HepG2 (cell line): ENCODE measurements at regions of chr1 and their contacts with region 1.

Region 1: DNA sequence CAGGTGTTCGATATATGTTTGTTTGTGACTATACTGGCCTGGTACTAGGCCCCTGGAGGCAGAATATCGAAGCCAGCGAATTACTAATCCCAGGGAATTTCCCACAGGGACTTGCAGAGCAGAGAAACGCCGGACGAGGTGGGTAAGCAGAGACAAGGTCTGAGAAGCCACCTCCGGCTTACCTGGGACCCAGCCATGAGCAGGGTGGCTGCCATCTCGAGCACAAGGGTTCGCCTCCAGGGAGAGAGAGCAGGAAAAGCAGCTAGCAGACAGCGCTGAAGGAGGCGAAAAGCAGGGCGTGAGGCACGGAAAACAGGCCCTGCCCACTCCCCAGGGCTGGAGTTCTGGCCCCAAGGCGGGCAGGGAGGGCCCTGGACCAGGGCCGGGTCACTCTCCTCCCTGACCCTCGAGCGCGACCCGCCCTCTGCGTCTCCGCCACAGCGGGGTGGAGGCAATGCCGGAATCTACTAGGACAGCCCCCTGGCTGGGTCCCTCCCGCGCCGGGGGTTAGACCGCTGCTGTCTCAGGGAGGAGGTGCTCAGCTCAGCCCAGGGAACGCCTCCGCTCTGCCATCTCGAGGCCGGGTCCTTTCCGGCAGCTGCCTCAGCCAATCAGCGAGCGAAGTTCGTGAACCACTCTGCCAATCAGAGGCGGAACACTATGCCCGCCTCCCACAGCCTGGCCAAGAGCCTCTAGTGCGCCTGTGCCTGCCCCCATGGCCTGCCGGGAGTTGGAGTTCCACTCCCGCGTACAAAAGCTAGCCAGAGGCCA is 1.7 kb downstream of the ZNF436 start:
- DNase-seq: peak; percentile 97
- ATAC-seq: peak; percentile 92
- H3K4me3 ChIP-seq: peak overlapping the region; percentile 92 to 99 (median 93)
- H3K27ac ChIP-seq: peak overlapping the region; percentile 96
- H3K4me1 ChIP-seq: peaks cover 34% of the 10 kb centered on the region
- H3K27me3 ChIP-seq: no peaks in the 10 kb centered on the region; a peak in 1 of 5 replicates
- CTCF ChIP-seq: no peak; the same call in 1 of the 2 replicates
- EP300 ChIP-seq: no peak
- POLR2A ChIP-seq: peak; percentile 85 to 86
- RAD21 ChIP-seq: peak; percentile 10; the same call in 1 of the 2 replicates

Region 2: DNA sequence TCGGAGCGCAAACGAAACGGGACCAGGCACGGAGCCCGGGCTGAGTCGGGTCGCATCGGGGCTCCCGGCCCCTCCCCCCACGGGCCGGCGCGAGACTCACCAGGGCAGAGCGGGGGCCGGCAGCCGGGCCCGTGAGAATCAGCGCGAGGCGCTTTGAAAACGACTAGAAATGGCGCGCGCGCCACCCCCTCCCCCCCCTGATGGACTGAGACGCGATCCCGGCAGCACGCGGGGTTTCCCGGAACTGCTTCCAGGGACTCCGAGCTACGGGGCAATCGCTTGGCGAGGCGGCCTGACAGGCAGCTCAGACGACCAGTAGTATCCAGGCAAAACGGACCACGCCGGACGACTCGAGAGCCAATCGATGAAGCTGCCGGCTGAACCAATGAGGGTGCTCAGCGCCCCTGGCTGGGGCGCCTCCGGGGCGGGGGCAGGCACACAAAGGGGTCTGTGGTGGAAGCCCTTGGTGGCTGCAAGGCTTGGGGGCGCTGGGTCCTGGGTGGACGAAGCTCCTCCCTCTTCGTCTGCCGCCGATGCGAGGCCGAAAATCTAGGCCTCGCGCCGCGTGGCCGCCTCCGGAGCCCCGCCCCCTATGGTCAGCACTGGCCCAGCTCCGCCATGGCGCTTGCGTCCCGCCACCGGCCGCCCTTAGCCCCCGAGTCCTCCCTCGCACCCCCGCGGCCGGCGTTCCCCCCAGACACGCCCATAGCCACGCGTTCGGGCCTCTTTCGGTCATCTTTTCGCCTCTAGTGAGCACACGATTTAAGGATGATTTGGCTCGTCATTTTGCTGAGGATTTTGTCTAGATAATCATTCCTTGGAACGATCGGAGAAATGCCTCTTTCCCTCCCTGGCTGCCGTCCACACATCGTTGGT is 23.6 kb before region 1 on chr1 and contains the start of gene HNRNPR:
- CTCF ChIA-PET with region 1: no interaction called
- POLR2A ChIA-PET with region 1: interaction called, 130 read pairs
- in situ Hi-C with region 1: no loop called
- intact Hi-C with region 1: loop called (anchors 2 kb)
- DNase-seq: peak; percentile 99
- ATAC-seq: peak; percentile 97
- H3K4me3 ChIP-seq: peak within 1 kb of the TSS; percentile 81 to 83 (median 83)
- H3K27ac ChIP-seq: peak within 1 kb of the TSS; percentile 94
- H3K4me1 ChIP-seq: peaks cover 31% of the 10 kb centered on the region
- H3K27me3 ChIP-seq: no peaks in the 10 kb centered on the region; a peak in 2 of 5 replicates
- CTCF ChIP-seq: peak; percentile 36
- EP300 ChIP-seq: peak in 1 of 2 experiments; percentile 42; a peak in 2 of 4 replicates
- POLR2A ChIP-seq: peak; percentile 81 to 83
- RAD21 ChIP-seq: no peak
- total RNA-seq, gene HNRNPR: 216 and 303 TPM in 2 replicates

Region 3: DNA sequence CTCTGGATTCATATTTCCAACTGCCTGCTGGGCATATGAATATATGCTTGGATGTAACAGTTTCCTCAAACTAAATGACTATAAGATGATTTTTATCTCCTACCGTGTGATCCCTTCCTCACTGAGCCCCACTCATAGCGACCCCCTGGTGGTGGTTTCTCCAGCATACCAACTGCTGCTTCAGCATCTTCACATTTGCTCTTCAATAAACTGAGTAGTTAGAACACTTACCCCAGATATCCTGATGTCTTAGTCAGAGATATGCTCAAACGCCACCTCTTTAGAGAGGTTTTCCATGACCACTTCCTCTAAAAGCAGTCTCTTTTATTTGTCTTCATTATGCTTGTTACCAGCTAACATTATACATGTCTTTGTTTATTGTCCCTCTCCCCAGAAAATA is 13.7 kb before region 1 on chr1:
- CTCF ChIA-PET with region 1: no interaction called
- POLR2A ChIA-PET with region 1: interaction called, 10 read pairs
- in situ Hi-C with region 1: no loop called
- intact Hi-C with region 1: no loop called
- DNase-seq: peak; percentile 16
- ATAC-seq: peak; percentile 81
- H3K4me3 ChIP-seq: peak overlapping the region in 2 of 3 experiments; percentile 17 to 24; a peak in 3 of 6 replicates
- H3K27ac ChIP-seq: no peak overlapping the region
- H3K4me1 ChIP-seq: peaks cover 18% of the 10 kb centered on the region
- H3K27me3 ChIP-seq: no peaks in the 10 kb centered on the region
- CTCF ChIP-seq: 0 out of 2 replicates have a peak, but pooled peaks have one; percentile 18
- EP300 ChIP-seq: no peak
- POLR2A ChIP-seq: no peak
- RAD21 ChIP-seq: no peak

Region 4: GRCh38 chr1:23403735-23404486 is 35.9 kb after region 1 on chr1:
- CTCF ChIA-PET with region 1: no interaction called
- POLR2A ChIA-PET with region 1: interaction called, 4 read pairs
- in situ Hi-C with region 1: no loop called
- intact Hi-C with region 1: loop called (anchors 1 kb)
- DNase-seq: peak; percentile 46
- ATAC-seq: peak; percentile 87
- H3K4me3 ChIP-seq: no peak overlapping the region
- H3K27ac ChIP-seq: no peak overlapping the region
- H3K4me1 ChIP-seq: no peaks in the 10 kb centered on the region
- H3K27me3 ChIP-seq: no peaks in the 10 kb centered on the region
- CTCF ChIP-seq: peak; percentile 92
- EP300 ChIP-seq: no peak
- POLR2A ChIP-seq: no peak
- RAD21 ChIP-seq: peak; percentile 78

Region 5: GRCh38 chr1:23422241-23423030 is 54.5 kb after region 1 on chr1:
- CTCF ChIA-PET with region 1: no interaction called
- POLR2A ChIA-PET with region 1: interaction called, 10 read pairs
- in situ Hi-C with region 1: no loop called
- intact Hi-C with region 1: no loop called
- DNase-seq: no peak
- ATAC-seq: no peak
- H3K4me3 ChIP-seq: 0 out of 6 replicates have a peak overlapping the region, but pooled peaks of 1 of the 3 experiments have one; percentile 88
- H3K27ac ChIP-seq: peak overlapping the region; percentile 92
- H3K4me1 ChIP-seq: peaks cover 79% of the 10 kb centered on the region
- H3K27me3 ChIP-seq: no peaks in the 10 kb centered on the region
- CTCF ChIP-seq: no peak
- EP300 ChIP-seq: no peak
- POLR2A ChIP-seq: no peak
- RAD21 ChIP-seq: no peak

Region 6: DNA sequence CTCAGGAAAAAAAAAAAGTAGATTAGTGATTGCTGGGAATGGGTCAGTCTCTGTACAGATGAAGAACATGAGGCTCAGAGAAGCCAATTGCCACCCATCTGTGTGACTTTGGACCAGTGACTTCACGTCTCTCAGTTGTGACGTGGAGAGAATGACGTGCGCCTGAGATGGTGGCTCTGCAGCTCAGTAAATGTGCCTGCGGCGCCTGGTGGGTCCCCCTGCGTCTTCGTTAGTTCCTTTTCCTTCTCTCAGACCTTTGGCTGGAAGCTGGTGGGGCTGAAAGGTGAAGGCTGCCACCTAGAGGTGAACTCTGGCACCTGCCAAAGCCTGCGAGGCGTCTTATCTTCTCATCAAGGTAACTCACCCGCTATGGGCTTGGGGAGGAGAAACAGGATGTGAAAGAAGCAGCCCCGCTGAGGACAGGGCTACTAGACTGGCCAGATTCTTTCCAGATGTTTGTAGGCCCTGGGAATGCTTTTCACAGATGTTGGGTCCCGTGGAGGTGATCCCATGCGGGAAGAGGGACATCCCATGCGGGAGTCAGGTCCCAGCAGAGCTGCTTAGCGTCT is 171.8 kb after region 1 on chr1:
- CTCF ChIA-PET with region 1: no interaction called
- POLR2A ChIA-PET with region 1: no interaction called
- in situ Hi-C with region 1: no loop called
- intact Hi-C with region 1: loop called (anchors 10 kb)
- DNase-seq: peak; percentile 71
- ATAC-seq: peak; percentile 78
- H3K4me3 ChIP-seq: peak overlapping the region in 2 of 3 experiments; percentile 23 to 63; a peak in 2 of 6 replicates
- H3K27ac ChIP-seq: no peak overlapping the region
- H3K4me1 ChIP-seq: peaks cover 81% of the 10 kb centered on the region
- H3K27me3 ChIP-seq: no peaks in the 10 kb centered on the region
- CTCF ChIP-seq: peak; percentile 94
- EP300 ChIP-seq: no peak
- POLR2A ChIP-seq: no peak
- RAD21 ChIP-seq: peak; percentile 94

Region 7: DNA sequence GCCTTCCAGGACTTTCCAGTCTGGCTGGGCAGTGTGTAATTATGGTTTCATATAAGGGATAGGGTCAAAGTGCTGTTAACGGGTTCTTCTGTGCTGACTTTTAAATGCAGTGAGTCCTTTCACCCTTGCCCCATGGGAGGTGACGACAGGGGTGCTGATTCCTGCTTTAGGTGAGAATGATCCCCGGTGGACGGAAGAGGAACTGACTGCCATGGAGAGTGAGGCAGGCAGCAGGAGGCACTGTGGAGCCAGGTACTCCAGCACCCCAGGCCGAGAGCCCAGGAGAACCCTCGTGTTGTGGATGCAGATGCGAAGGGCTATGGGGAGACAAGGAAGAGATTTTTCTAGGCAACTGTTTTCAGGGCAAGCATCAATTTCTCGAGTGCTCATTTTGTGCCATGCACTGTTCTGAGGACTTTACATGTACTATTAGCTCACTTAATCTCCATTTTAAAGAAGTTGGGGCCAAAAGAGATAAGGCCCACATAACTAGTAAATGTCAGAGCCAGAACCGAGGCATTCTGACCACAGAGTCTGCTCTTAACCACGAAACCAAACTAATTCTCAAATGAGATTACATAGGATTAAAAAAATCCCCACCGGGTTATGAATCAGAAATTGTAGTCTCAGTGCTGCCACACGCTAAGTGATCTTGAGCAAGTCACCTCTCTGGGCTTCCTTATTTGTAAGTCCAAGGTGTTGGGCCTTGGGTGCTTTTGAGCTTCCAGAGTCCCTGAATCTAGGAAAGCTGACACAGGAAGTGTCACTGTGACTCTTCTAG is 1017.4 kb after region 1 on chr1:
- CTCF ChIA-PET with region 1: no interaction called
- POLR2A ChIA-PET with region 1: no interaction called
- in situ Hi-C with region 1: no loop called
- intact Hi-C with region 1: loop called (anchors 10 kb)
- DNase-seq: no peak
- ATAC-seq: peak; percentile 71
- H3K4me3 ChIP-seq: no peak overlapping the region
- H3K27ac ChIP-seq: no peak overlapping the region
- H3K4me1 ChIP-seq: peaks cover 18% of the 10 kb centered on the region
- H3K27me3 ChIP-seq: no peaks in the 10 kb centered on the region
- CTCF ChIP-seq: peak; percentile 48
- EP300 ChIP-seq: no peak
- POLR2A ChIP-seq: no peak
- RAD21 ChIP-seq: no peak